PC-3 (cell line): ENCODE measurements at regions of chr20 and their contacts with region 1.

Region 1: GRCh38 chr20:32762149-32762753 is at the start of gene DNMT3B:
- DNase-seq: peak; percentile 88
- ATAC-seq: peak; percentile 79
- H3K4me3 ChIP-seq: peak within 1 kb of the TSS; percentile 98
- H3K27ac ChIP-seq: peak within 1 kb of the TSS; percentile 31; the same call in 1 of the 2 replicates
- H3K4me1 ChIP-seq: peaks cover 13% of the 10 kb centered on the region
- H3K27me3 ChIP-seq: no peaks in the 10 kb centered on the region
- CTCF ChIP-seq: 0 out of 2 replicates have a peak, but pooled peaks have one; percentile 13
- total RNA-seq, gene DNMT3B: 7.3 and 9.3 TPM in 2 replicates

Region 2: GRCh38 chr20:32718731-32719348 is 43.4 kb before region 1 on chr20:
- CTCF ChIA-PET with region 1: interaction called, 13 read pairs
- POLR2A ChIA-PET with region 1: no interaction called
- intact Hi-C with region 1: no loop called
- DNase-seq: no peak
- ATAC-seq: no peak
- H3K4me3 ChIP-seq: no peak overlapping the region
- H3K27ac ChIP-seq: no peak overlapping the region
- H3K4me1 ChIP-seq: no peaks in the 10 kb centered on the region
- H3K27me3 ChIP-seq: no peaks in the 10 kb centered on the region
- CTCF ChIP-seq: no peak

Region 3: DNA sequence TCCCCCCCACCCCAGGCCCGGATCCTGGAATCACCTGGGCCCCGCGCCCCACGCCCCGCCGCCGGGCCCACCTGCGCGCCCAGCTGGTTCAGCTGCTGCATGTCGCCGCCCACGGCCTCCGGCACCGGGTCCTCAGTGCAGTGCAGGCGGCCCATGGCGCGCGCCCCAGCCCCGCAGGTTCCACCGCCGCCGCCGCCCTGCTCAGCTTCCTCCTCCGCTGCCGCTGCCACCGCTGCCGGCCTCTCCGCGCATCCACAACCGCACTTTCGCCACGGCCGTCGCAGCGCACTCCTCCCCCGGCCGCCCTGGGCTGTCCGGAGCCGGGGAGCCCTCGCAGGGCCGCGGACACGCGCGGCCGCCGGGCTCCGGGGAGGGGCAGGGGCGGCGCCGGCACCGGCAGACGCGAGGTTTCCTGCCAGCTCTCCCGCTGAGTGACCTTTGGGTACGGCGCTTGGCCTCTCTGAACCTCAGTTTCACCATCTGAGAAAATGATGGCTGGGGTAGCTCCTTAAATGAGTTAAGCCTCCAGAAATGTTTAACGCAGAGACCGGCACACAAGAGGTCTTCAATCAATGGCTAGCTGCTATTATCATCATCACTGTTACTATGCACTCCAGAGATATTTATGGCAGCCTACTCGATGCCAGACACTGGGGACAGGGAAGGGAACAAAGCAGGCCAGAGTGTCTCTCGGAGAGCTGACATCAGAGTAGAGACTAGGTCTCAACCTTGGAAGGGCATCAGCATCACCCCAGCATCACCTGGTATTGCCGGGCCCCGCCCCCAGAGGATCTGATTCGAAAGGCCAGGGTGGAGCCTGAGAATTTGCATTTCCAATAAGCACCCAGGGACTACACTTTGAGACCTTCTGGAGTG is 18.8 kb before region 1 on chr20 and contains the start of gene COMMD7:
- CTCF ChIA-PET with region 1: interaction called, 5 read pairs
- POLR2A ChIA-PET with region 1: no interaction called
- intact Hi-C with region 1: loop called (anchors 2 kb)
- DNase-seq: peak; percentile 59
- ATAC-seq: peak; percentile 53
- H3K4me3 ChIP-seq: peak within 1 kb of the TSS; percentile 79
- H3K27ac ChIP-seq: no peak within 1 kb of the TSS
- H3K4me1 ChIP-seq: peaks cover 28% of the 10 kb centered on the region
- H3K27me3 ChIP-seq: no peaks in the 10 kb centered on the region
- CTCF ChIP-seq: no peak
- total RNA-seq, gene COMMD7: 32.5 and 33.5 TPM in 2 replicates

Region 4: DNA sequence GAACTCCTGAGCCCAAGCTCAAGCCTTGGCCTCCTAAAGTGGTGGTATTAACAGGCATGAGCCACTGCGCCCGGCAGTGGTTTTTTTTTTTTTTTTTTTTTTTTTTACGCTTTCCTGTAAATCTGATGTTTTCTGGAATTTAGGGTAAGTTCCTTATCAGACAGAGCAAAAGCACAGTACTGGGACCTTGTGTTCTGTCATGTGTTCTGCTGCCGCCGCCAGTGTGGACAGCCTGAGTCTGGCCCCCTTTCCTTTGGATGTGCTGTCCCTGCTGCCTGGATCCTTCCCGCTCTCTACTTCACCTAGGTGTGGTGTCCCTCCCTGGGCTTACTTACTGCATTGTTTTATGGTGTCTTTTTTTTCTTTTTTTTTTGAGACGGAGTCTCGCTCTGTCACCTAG is 11.6 kb after region 1 on chr20:
- CTCF ChIA-PET with region 1: interaction called, 11 read pairs
- POLR2A ChIA-PET with region 1: interaction called, 3 read pairs
- intact Hi-C with region 1: no loop called
- DNase-seq: no peak
- ATAC-seq: no peak
- H3K4me3 ChIP-seq: no peak overlapping the region
- H3K27ac ChIP-seq: no peak overlapping the region
- H3K4me1 ChIP-seq: peaks cover 14% of the 10 kb centered on the region
- H3K27me3 ChIP-seq: no peaks in the 10 kb centered on the region
- CTCF ChIP-seq: no peak